ENCODE measurements at regions of chr2 and their contacts with region 1.

Region 1: DNA sequence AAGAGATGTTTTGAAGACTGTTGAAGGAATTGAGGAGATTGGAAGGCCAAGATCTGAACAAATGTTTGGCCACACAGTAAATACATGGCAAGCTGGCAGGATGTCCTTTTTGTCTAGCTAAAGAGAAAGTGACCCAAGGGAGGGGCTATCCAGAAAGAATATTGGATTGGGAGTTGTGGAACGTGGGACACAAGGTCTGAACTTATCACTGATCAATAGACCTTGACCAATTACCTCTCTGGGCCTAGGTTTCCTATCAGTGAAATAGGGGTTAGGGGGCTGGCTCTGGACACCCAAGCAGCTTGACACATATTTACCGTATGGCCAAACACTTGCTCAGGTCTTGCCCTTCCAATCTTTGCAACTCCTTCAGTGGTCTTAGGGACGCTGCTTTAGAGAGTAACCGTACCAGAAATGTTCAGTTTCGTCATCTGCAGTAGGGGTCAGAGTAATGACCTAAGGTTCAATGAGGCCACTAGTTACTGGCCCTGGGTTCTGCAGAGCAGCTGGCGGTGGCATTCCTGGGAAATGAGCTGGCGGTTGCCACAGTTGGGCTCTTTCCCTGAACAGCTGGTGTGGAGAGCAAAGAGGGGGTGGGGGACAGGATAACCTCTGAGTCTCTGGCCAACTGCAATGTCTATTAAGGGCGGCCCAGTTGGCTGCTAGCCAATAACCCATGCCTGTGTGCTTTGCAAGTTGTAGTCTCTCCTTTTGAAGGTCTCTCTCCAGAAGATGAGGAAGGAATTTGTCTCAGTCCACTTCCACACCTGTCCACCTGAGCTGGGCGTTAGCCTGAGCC is 70.2 kb upstream of the STPG4 start:
- DNase-seq: peak; percentile 83
- ATAC-seq: peak; percentile 81

Region 2: GRCh38 chr2:47008381-47009252 is 216.6 kb before region 1 on chr2:
- intact Hi-C with region 1: loop called (anchors 5 kb)
- DNase-seq: no peak
- ATAC-seq: peak; percentile 76

Measured in Right ventricle myocardium inferior (tissue), 1 donor.